ENCODE measurements at regions of chr15 and their contacts with region 1.

Region 1: DNA sequence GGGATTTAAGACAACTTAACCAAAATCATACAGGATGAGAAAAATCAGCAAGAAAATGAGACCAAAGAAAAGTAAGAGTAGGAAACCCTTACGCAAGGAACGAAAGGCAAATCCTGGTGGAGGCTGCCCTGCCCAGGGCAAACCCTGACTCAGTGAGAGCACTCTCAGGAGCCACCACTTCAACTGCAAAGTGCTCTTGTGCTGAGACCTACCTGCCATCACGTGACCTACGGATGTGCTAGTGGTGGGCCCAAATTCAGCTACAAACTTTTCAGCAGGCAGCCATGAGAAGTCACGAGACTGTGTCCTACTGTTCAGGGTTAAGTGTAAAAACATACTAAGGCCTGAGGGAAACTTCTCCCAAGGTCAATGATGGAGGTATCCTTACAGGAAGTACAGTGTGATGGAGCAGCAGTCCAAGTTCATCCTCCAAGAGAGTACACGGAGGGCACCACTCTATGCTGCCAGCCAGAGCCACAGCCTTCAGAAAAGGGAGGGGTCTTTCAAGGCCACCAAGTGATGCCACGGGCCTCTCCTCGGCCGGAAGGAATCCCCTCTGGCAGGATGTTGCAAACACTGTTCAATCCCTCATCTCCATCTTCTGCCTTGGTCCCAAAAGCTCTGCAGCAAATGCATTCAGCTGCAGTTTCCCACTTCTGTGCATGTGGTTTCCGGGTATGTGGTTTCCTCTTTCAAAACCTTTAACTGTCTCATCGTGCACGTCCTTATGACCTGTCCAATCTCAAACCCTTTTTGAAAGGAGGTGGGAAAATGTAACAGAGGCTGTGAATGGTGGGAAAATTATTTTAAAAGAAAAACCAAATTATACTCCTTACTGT is 9.5 kb downstream of the CHSY1 start:
- DNase-seq: no peak
- H3K4me3 ChIP-seq: no peak overlapping the region
- H3K27ac ChIP-seq: peak overlapping the region; percentile 30
- H3K4me1 ChIP-seq: peaks cover 85% of the 10 kb centered on the region
- H3K27me3 ChIP-seq: no peaks in the 10 kb centered on the region
- CTCF ChIP-seq: no peak
- POLR2A ChIP-seq: no peak

Region 2: GRCh38 chr15:100869151-100869999 is 373.0 kb before region 1 on chr15:
- intact Hi-C with region 1: no loop called
- DNase-seq: no peak
- H3K4me3 ChIP-seq: no peak overlapping the region
- H3K27ac ChIP-seq: no peak overlapping the region
- H3K4me1 ChIP-seq: no peaks in the 10 kb centered on the region
- H3K27me3 ChIP-seq: no peaks in the 10 kb centered on the region
- CTCF ChIP-seq: peak in 1 of 3 experiments; percentile 11
- POLR2A ChIP-seq: no peak

Region 3: DNA sequence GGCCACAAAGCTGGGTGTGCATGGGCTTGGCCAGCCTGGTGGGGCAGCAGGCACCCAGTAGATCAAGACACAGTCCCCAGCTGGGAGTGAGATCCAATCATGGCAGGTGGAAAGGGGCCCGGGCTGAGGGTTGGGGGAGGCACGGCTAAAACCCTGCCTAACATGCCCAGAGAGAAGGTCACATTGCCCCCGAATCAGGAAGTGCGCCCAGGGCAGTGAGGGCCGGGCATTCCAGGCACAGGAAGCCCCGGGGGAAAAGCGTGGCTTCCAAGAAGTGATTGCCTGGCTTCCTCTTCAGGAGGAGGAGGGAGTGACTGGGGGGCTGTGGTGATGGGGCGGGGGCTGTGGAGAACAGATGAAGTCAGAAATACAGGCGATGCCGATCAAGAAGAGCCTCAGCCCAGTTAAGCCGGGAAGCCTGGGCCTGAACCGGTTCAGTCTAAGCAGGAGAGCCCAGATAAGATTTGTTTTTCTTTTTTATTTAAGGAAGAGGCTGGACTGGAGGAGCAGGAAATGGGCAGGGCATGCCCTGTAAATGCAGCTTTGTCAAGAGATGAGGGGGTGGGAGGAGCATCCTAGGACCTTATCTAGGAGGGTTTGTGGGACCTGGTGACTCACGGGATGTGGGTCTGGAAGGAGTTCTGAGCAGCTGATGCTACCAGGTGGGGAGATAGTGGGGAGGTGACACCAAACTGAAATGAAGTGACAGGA is 74.5 kb before region 1 on chr15:
- intact Hi-C with region 1: no loop called
- DNase-seq: no peak
- H3K4me3 ChIP-seq: peak overlapping the region; percentile 8 to 36
- H3K27ac ChIP-seq: peak overlapping the region; percentile 82
- H3K4me1 ChIP-seq: peaks cover 65% of the 10 kb centered on the region
- H3K27me3 ChIP-seq: no peaks in the 10 kb centered on the region
- CTCF ChIP-seq: no peak
- POLR2A ChIP-seq: no peak

Region 4: DNA sequence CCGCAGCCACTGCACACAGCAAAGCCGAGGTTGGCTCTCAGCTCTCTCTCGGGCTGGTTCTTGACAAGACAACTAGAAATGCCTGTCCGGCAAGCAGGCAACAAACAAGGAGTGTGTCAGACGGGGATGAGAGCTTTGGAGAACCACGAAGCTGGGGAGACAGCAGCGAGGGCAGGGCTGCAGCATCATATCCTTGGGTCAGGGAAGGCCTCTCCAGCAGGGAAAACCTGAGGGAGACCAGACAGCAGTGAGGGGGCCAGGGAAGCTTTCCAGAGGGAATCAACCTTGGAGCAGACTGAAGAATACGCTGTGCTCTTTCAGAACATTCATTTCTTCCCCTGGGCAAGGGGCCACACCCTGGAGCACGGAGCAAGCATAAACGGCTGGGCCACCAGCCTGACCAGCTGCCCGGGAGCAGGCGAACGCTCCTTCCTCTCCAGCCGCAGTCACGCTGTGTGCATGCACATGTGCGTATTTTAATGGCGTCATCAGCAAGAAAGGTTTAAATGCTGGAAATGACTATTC is 49.2 kb before region 1 on chr15:
- intact Hi-C with region 1: loop called (anchors 10 kb)
- DNase-seq: peak in 1 of 2 donors; percentile 89
- H3K4me3 ChIP-seq: peak overlapping the region; percentile 8 to 28
- H3K27ac ChIP-seq: peak overlapping the region; percentile 77
- H3K4me1 ChIP-seq: peaks cover 80% of the 10 kb centered on the region
- H3K27me3 ChIP-seq: no peaks in the 10 kb centered on the region
- CTCF ChIP-seq: no peak
- POLR2A ChIP-seq: no peak

Region 5: DNA sequence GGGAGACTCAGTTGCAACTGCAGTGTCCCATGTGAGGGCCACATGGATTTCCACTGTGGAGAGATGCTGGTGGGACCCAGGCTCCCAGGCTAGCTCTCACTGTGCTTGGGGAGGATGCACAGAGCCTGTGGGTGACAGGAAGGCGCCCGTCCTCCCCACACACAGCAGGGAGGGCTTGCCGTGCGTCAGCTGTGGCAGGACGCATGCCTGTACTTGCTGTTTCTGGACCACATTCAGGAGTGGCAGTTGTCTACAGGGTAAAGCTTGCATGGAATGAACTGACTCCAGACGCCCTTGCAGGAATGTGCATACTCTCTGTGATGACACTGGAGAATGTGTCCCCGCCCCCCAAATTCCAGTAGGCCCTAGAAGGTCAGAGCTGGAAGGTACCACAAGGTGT is 116.5 kb after region 1 on chr15:
- intact Hi-C with region 1: no loop called
- DNase-seq: no peak
- H3K4me3 ChIP-seq: no peak overlapping the region
- H3K27ac ChIP-seq: no peak overlapping the region
- H3K4me1 ChIP-seq: no peaks in the 10 kb centered on the region
- H3K27me3 ChIP-seq: no peaks in the 10 kb centered on the region
- CTCF ChIP-seq: no peak
- POLR2A ChIP-seq: no peak

Measured in vagina (tissue), 2 donors.